ENCODE measurements at regions of chr3 and their contacts with region 1.

Region 1: GRCh38 chr3:115692887-115693524 is 69.7 kb downstream of the GAP43 start:
- DNase-seq: peak; percentile 85

Region 2: DNA sequence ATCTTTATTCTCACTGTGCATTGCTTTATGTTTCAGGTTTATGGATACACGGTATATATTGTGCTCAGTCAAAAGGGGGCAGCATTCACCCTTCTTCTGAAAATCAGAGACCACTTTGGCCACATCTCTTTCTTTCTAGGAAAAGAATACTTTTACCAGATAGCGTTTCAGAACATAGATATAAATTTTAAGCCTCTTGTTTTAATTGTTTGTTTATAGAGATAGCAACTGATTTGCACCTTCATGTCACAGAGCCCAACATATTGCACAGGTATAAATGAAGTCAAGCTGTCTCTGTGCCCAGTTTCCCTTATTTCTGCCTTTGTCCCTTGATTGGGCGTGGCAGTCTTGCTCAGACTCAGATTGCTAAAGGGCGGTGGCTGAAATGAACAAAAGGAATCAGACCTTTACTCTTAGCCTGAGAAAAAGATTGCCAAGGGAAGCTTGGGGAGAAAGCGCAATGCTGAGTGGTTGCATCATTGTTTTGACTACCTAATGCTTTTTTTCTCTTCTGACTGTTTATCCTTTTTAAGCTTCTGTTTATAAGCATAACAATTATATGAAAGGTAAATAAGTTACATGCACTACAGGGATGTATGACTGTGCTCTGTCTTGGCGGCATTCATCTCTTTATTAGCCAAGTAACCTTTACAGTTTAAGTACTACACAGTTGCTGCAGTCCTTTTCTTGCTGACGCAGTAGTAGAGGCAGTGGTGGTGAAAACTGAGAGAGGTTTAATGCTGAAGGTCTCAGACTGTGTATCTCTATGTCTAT is 475.1 kb before region 1 on chr3:
- intact Hi-C with region 1: loop called (anchors 2 to 5 kb)
- DNase-seq: peak; percentile 46

Region 3: DNA sequence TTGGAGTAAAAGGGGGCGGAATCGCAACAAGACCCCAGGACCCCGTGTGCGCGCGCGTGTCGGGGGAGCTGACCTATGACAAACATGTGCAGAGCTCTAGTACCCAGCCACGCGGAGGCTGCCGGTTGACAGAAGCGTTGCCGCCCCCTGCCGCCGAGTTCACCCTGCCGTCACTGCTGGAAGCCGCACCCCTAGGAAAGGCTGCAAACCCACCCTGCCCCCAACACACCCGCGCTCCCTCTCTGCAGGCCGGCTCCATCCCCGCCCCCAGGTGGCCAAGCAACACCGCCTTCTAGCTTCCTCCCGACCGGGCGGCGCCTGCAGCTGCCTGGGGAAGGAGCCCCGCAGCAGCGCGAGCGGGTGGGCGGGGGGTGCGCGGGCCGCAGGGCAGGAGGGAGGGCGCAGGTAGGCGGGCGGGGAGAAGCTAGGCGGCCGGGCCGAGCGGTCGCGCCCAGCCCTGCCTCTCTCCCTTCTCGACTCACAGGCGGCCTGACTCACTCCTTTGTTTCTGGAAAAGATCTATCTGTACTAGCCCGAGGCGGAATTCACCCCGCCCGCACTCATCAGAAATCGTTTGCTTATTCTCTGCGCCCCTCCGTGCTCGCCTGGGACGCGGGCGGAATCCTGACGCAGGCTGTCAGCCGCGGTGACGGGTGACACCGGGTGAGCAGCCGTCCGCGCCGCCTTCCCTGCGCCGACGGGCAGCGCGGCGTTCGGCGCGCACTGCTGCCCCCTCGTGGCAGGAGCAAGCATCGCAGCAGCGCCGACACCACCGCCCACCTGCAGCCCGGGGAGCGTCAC is 91.1 kb after region 1 on chr3:
- intact Hi-C with region 1: loop called in 1 of 2 experiments (anchors 10 kb)
- DNase-seq: peak; percentile 96

Region 4: DNA sequence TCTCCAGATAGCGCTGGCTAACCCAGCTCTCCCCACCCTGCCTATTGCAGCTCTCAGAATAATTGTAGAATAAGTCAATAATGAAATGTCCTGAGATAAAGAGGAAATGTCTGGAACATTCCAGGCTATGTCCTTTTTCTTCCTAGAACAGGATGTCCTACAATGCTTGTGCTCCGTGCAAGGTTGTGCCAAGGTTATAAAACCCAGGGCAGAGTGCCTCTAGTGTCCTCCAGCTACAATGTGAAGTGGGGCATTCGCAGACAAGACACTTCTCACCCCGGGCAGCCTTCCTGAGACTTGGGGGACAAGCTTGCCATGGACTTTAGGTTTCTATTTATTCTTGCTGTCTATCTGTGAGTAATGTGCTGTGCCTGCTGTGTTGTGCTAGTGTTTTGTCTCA is 1917.2 kb after region 1 on chr3:
- intact Hi-C with region 1: no loop called
- DNase-seq: no peak